Thyroid gland (tissue), 4 donors: ENCODE measurements at regions of chr3 and their contacts with region 1.

Region 1: DNA sequence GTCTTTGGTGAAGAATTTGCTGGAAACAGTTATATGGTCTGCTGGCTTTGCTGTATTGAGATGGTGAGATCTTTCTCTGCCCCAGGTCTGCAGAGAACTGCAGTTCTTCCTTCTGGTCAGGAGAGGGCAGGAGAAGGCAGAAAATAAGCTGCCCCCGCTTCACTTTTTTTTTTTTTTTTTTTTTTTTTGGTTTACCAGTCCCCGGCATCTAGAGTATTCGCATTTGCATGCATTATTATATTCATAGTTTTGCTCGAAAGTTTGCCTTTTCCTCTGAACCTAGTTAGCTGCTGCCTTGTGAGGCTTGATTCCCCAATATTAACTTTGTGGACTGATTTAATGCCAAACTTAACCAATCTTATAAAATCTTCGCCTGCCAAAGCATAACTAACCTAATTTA is 10.6 kb upstream of the PARL start:
- DNase-seq: peak; percentile 20 to 23
- H3K4me3 ChIP-seq: no peak overlapping the region
- H3K27ac ChIP-seq: no peak overlapping the region
- H3K4me1 ChIP-seq: no peaks in the 10 kb centered on the region
- H3K27me3 ChIP-seq: no peaks in the 10 kb centered on the region
- CTCF ChIP-seq: peak; percentile 41 to 93 (median 75)
- POLR2A ChIP-seq: no peak

Region 2: GRCh38 chr3:184001761-184002160 is 106.5 kb after region 1 on chr3:
- intact Hi-C with region 1: no loop called
- DNase-seq: no peak
- H3K4me3 ChIP-seq: no peak overlapping the region
- H3K27ac ChIP-seq: no peak overlapping the region
- H3K4me1 ChIP-seq: peaks cover 5 to 6% of the 10 kb centered on the region in 2 donors
- H3K27me3 ChIP-seq: no peaks in the 10 kb centered on the region
- CTCF ChIP-seq: no peak
- POLR2A ChIP-seq: no peak

Region 3: DNA sequence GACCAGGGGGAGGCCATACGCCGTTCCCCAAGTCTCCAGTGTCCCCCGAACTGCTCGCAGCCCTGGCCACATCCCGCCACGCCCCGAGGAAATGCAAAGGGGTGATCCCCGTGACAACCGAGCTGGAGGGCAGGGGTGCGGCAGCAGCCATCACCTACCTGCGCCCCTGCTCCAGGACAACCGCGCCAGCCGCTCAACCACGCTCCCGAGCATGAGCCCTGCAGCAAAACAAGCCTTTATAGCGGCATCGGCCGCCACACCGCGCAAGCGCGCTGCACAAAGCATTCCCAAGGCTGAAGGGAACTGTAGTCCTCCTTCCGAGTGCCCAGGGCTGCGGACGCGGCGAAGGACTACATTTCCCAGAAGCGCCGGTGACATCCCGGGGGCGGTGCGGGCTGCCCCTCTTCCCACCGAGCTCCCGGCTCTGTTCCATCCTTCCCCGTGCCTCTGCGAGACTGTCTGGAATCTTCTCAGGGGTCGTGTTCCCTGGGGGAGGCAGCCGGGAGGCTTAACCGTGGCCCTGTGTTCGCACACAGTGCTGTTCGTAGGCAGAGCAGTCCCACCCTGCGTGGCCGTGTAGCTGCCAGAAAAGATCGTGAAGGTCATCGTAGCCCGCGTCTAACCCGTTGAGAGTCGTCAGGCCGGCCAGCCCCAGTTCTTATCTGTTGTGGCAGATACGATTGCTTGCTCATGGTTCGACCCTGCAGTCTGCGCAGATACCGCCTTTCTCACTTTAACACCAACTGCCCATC is 122.6 kb after region 1 on chr3 and contains the start of gene ABCC5:
- intact Hi-C with region 1: loop called (anchors 2 kb)
- DNase-seq: peak; percentile 91
- H3K4me3 ChIP-seq: peak within 1 kb of the TSS; percentile 97
- H3K27ac ChIP-seq: peak within 1 kb of the TSS; percentile 10 to 79 (median 63)
- H3K4me1 ChIP-seq: peaks cover 6% of the 10 kb centered on the region in 2 donors
- H3K27me3 ChIP-seq: no peaks in the 10 kb centered on the region
- CTCF ChIP-seq: peak in 4 of 6 experiments; percentile 38 to 59 (median 46)
- POLR2A ChIP-seq: peak in 1 of 2 donors; percentile 52
- total RNA-seq, gene ABCC5: 12.2 to 24.3 (median 18.2) TPM

Region 4: DNA sequence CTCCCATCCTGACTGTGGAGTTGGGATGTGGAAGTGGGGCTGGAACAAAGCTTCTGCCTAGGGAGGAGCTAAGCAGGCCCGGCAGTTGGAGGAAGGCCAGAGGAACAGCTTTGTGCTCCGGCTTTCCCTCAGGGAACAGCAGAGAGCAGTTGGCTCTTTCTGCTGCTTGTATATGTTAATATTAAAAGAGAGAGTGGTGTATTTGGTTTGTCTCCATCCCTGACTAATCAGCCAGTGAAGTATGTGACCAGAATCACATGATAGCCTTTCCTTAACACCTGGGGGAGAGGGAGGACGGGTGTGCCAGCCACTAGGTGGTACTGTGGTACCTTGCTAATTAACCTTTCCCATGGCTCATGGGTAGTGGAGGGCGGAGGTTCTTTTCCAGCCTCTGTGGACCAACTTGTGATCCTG is 249.8 kb after region 1 on chr3:
- intact Hi-C with region 1: loop called (anchors 10 kb)
- DNase-seq: peak; percentile 51 to 55
- H3K4me3 ChIP-seq: no peak overlapping the region
- H3K27ac ChIP-seq: no peak overlapping the region
- H3K4me1 ChIP-seq: no peaks in the 10 kb centered on the region
- H3K27me3 ChIP-seq: no peaks in the 10 kb centered on the region
- CTCF ChIP-seq: peak in 3 of 6 experiments; percentile 45 to 50 (median 47)
- POLR2A ChIP-seq: no peak

Region 5: DNA sequence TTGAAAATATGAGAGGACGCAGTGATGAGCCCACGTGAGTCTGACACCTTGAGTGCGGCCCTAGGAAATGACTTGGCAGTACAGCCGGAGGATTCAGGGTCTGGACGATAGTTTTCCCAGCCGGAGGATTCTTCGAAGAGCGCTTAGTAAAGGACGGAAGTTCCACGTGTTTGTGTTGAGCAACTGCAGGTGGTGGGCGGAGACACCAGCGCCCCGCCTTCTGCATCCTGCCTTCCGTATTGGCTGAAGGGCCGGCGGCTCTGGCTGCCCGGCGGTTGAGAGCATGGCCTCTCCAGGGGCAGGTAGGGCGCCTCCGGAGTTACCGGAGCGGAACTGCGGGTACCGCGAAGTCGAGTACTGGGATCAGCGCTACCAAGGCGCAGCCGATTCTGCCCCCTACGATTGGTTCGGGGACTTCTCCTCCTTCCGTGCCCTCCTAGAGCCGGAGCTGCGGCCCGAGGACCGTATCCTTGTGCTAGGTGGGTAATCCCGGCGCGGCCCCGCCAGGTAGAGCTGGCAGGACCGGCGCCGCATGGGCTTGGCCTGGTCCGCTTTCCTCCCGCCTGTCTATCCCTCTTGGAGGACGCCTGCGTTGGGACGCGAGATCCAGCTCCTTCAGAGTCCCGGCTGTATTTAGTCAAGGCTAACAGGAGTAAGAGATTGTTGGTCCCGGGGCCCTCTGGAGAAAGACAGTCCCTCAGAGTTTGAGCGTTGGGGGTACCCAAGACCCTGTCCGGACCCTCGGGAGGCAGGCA is 354.3 kb after region 1 on chr3 and contains the start of gene EEF1AKMT4:
- intact Hi-C with region 1: loop called (anchors 10 kb)
- DNase-seq: peak; percentile 96 to 98
- H3K4me3 ChIP-seq: peak within 1 kb of the TSS; percentile 64 to 91 (median 89)
- H3K27ac ChIP-seq: peak within 1 kb of the TSS; percentile 51 to 82 (median 68)
- H3K4me1 ChIP-seq: peaks cover 18 to 30% of the 10 kb centered on the region in 2 donors
- H3K27me3 ChIP-seq: no peaks in the 10 kb centered on the region
- CTCF ChIP-seq: peak in 3 of 6 experiments; percentile 8 to 28 (median 17)
- POLR2A ChIP-seq: peak in 1 of 2 donors; percentile 63
- total RNA-seq, gene EEF1AKMT4: 9.4 to 17.1 (median 13.5) TPM

Region 6: DNA sequence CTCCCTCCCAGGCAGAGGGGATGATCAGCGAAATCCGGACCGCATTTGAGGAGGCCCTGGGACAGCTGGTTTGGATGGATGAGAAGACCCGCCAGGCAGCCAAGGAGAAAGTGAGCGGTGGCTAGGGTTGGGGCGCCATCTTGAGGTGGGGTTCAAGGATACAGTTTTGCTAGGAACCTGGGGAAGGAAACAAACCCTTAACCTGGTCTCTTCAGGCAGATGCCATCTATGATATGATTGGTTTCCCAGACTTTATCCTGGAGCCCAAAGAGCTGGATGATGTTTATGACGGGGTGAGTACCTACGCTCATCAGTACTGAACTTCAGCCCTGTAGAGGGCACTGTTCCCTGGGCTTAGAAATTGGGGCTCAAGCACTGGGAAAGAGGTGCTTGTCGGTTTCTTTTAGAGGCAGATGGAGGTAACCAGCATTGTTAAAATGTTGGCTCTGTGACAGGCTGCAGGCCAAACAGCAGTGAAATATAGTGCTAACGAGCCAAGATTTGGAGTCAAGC is 394.2 kb after region 1 on chr3:
- intact Hi-C with region 1: loop called (anchors 5 kb)
- DNase-seq: peak; percentile 44 to 49
- H3K4me3 ChIP-seq: no peak overlapping the region
- H3K27ac ChIP-seq: no peak overlapping the region
- H3K4me1 ChIP-seq: no peaks in the 10 kb centered on the region
- H3K27me3 ChIP-seq: no peaks in the 10 kb centered on the region
- CTCF ChIP-seq: peak in 4 of 6 experiments; percentile 41 to 67 (median 54)
- POLR2A ChIP-seq: no peak